Mammary epithelial cell (primary cell): ENCODE measurements at regions of chr5 and their contacts with region 1.

Region 1: DNA sequence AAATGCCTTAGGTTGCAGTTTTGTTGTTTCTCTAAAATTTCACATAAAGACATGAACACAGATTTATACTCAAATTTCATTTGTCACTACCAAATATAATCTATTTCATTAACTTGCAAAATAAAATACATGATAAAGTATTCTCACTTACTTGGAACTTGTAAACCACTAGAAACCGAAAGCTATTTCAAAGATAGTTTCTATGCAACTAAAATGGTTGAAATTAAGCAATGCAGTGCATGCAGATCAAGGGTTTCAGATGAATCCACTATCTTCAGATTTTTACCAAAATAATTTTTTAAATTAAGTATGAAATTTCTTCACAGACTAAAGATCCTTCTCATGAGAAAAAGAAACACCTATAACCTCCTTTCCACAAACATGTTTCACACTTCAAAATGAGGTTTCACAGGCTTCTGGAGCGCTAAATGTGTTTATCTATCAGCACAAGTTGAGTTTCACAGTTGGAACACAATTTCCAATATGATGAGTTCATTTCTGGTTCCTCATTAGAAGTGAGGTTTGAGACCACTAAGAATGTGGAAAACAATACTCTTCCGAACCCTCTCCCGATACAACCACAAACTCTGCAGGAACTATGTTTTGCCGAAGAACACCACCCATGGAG is 63.9 kb downstream of the EPB41L4A start:
- DNase-seq: no peak
- H3K4me3 ChIP-seq: no peak overlapping the region
- H3K27ac ChIP-seq: no peak overlapping the region
- H3K4me1 ChIP-seq: no peaks in the 10 kb centered on the region
- H3K27me3 ChIP-seq: peaks cover 4% of the 10 kb centered on the region
- CTCF ChIP-seq: no peak

Region 2: DNA sequence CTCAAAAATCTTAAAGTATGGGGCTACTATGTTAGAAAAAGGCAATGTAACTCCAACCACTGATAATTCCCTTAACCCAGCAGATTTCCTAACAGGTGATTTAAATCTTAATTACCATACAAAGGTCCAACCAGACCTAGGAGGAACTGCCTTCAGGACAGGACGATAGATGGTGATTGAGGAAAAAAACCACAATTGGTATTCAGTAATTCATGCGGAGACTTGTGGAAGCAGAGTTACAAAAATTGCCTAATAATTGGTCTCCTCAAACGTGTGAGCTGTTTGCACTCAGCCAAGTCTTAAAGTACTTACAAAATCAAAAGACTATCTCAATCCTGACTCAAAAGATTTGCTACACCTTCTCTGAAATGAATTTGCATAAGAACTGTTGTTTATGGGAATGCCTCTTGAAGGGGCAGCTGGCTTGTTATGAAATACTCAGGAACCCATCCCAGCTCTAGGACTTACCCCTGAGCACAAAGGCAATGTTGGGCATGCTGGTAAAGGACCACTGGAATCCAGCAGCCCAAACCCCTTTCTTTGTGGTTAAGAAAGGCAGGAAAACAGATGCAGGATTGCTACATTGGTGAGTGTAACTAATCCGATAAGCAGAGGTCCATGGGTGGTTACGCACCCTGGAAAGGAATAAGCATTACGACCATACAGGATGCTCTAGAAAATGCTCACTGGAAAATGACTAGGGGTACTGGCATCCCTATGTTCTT is 90.6 kb after region 1 on chr5:
- CTCF ChIA-PET with region 1: no interaction called
- dilution Hi-C with region 1: loop called (anchors 5 kb)
- in situ Hi-C with region 1: no loop called
- intact Hi-C with region 1: no loop called
- DNase-seq: peak; percentile 48
- H3K4me3 ChIP-seq: no peak overlapping the region
- H3K27ac ChIP-seq: no peak overlapping the region
- H3K4me1 ChIP-seq: no peaks in the 10 kb centered on the region
- H3K27me3 ChIP-seq: peaks cover 4% of the 10 kb centered on the region
- CTCF ChIP-seq: no peak

Region 3: GRCh38 chr5:112604732-112605630 is 249.8 kb after region 1 on chr5:
- CTCF ChIA-PET with region 1: no interaction called
- dilution Hi-C with region 1: no loop called
- in situ Hi-C with region 1: no loop called
- intact Hi-C with region 1: no loop called
- DNase-seq: no peak
- H3K4me3 ChIP-seq: no peak overlapping the region
- H3K27ac ChIP-seq: no peak overlapping the region
- H3K4me1 ChIP-seq: no peaks in the 10 kb centered on the region
- H3K27me3 ChIP-seq: no peaks in the 10 kb centered on the region
- CTCF ChIP-seq: no peak

Region 4: GRCh38 chr5:112616812-112617547 is 261.8 kb after region 1 on chr5:
- CTCF ChIA-PET with region 1: no interaction called
- dilution Hi-C with region 1: no loop called
- in situ Hi-C with region 1: no loop called
- intact Hi-C with region 1: no loop called
- DNase-seq: no peak
- H3K4me3 ChIP-seq: no peak overlapping the region
- H3K27ac ChIP-seq: no peak overlapping the region
- H3K4me1 ChIP-seq: no peaks in the 10 kb centered on the region
- H3K27me3 ChIP-seq: peaks cover 2% of the 10 kb centered on the region
- CTCF ChIP-seq: no peak